Activated T-helper 1 cell treated with anti-CD3 and anti-CD28 coated beads, Interleukin-12 subunit alpha, Interleukin-12 subunit beta, Interleukin-2, Interleukin-4 antibody, amounts not matched to agents 30 ng/mL and 10 ng/mL and 1 ng/mL, durations not matched to agents 14 hours and 24 hours and 36 hours (primary cell): ENCODE measurements at regions of chr3 and their contacts with region 1.

Region 1: DNA sequence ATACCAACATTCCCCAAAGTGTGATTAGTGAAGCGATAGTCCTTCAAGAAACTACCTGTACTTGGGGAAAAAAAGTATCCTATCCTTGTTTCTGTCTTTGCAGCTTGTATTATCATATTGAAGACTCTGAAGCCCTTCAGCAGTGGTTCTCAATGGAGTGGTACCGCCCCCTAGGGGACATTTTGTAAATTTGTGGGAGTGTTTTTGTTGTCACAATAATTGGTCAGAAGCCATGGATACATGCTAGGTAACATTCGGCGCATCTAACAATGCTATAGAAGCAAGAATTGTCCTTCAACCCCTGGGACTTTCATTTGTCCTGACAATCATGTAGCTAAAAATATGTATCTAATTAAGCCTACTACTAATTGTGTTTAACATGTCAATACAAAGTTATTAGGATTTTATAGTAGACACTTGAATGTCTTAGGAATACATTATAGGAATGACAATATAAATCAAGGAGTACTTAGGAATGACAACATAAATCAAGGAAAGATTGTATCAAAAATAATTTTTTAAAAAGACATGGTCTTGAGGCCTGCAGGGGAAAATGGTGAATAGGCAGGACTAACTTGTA is 53.7 kb downstream of the NMD3 start:
- DNase-seq: peak; percentile 8
- H3K4me3 Mint-ChIP-seq: no peak overlapping the region
- H3K27ac Mint-ChIP-seq: peak overlapping the region; percentile 29
- H3K4me1 Mint-ChIP-seq: no peaks in the 10 kb centered on the region
- H3K27me3 Mint-ChIP-seq: peaks cover 3% of the 10 kb centered on the region

Region 2: DNA sequence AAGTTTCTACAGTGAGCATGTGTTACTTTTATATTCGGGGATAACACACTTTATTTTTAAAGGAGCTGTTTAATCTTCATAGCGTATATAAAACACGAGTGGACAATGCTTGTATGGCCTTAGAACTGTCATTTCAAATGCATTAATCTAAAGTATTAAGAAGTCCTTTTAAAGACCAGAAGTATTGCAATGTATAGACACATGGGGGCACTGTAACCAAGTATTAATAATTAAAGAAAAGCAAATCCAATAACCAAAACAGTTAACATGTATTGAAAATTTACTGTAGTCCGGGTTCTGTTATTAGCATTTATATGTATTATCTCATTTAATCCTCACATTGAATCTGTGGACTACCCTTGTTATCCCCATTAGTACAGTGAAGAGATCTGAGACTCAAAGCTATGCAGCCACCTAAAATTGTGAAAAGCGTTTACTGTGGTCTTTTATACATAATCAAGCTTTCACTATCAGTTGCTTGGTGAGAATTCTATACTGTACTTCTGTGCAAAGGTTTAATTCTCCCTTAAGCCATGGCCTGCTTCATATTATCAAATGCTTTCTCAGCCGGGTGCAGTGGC is 587.8 kb before region 1 on chr3:
- intact Hi-C with region 1: loop called (anchors 1 kb)
- DNase-seq: no peak
- H3K4me3 Mint-ChIP-seq: no peak overlapping the region
- H3K27ac Mint-ChIP-seq: no peak overlapping the region
- H3K4me1 Mint-ChIP-seq: no peaks in the 10 kb centered on the region
- H3K27me3 Mint-ChIP-seq: no peaks in the 10 kb centered on the region

Region 3: GRCh38 chr3:160707187-160707794 is 567.5 kb before region 1 on chr3:
- intact Hi-C with region 1: loop called (anchors 1 kb)
- DNase-seq: peak; percentile 8
- H3K4me3 Mint-ChIP-seq: no peak overlapping the region
- H3K27ac Mint-ChIP-seq: no peak overlapping the region
- H3K4me1 Mint-ChIP-seq: no peaks in the 10 kb centered on the region
- H3K27me3 Mint-ChIP-seq: peaks cover 15% of the 10 kb centered on the region

Region 4: DNA sequence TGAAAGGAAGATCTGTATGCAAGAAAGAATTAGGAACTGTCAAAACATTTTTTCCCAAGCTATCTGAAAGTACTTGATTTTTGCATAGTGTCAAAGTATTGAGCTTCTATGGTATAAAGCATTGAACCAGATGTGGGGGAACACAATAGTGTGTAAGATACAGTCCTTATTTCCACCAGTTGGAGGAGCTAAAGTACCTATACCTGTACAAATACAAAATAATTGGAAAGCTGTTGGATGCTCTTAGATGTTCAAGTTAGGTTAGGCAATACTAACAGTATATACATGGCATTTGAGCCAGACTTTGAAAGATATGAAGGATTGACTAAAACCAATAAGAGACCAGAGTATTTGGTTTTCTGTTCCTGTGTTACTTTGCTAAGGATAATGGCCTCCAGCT is 318.0 kb before region 1 on chr3:
- intact Hi-C with region 1: loop called (anchors 1 kb)
- DNase-seq: no peak
- H3K4me3 Mint-ChIP-seq: no peak overlapping the region
- H3K27ac Mint-ChIP-seq: no peak overlapping the region
- H3K4me1 Mint-ChIP-seq: no peaks in the 10 kb centered on the region
- H3K27me3 Mint-ChIP-seq: peaks cover 2% of the 10 kb centered on the region

Region 5: GRCh38 chr3:161409069-161409468 is 134.3 kb after region 1 on chr3:
- intact Hi-C with region 1: loop called (anchors 1 kb)
- DNase-seq: no peak
- H3K4me3 Mint-ChIP-seq: no peak overlapping the region
- H3K27ac Mint-ChIP-seq: no peak overlapping the region
- H3K4me1 Mint-ChIP-seq: no peaks in the 10 kb centered on the region
- H3K27me3 Mint-ChIP-seq: peaks cover 32% of the 10 kb centered on the region

Region 6: GRCh38 chr3:161423911-161424522 is 149.2 kb after region 1 on chr3:
- intact Hi-C with region 1: loop called (anchors 1 kb)
- DNase-seq: no peak
- H3K4me3 Mint-ChIP-seq: no peak overlapping the region
- H3K27ac Mint-ChIP-seq: no peak overlapping the region
- H3K4me1 Mint-ChIP-seq: no peaks in the 10 kb centered on the region
- H3K27me3 Mint-ChIP-seq: peaks cover 16% of the 10 kb centered on the region